ENCODE measurements at regions of chr12 and their contacts with region 1.

Region 1: GRCh38 chr12:111529424-111530368 is 69.4 kb downstream of the ATXN2 start:
- DNase-seq: no peak
- H3K4me3 ChIP-seq: no peak overlapping the region
- CTCF ChIP-seq: peak; percentile 70

Region 2: GRCh38 chr12:111519083-111519482 is 10.6 kb before region 1 on chr12:
- CTCF ChIA-PET with region 1: interaction called, 13 read pairs
- POLR2A ChIA-PET with region 1: no interaction called
- DNase-seq: no peak
- H3K4me3 ChIP-seq: no peak overlapping the region
- CTCF ChIP-seq: no peak

Region 3: DNA sequence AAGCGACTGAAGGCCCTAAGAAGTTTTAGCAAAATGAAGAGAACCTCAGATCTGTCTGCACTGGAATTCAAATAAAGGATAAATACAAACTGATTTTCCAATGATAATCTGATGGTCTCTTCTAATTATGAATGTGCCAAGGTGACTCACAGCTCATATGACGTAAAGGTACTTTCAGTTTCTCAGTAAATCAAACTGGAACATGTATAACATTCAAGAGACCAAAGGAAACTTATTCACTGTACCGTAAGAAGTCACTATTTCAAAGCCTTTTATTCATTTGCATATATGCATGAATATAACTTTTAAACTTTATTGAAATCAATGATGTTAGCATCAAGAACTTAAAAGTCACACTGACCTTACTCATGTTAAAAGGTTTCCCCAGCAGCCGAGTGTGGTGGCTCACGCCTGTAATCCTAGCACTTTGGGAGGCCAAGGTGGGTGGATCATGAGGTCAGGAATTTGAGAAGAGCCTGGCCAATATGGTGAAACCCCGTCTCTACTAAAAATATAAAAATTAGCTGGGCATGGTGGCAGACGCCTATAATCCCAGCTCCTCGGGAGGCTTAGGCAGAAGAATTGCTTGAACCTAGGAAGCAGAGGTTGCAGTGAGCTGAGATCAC is 17.2 kb after region 1 on chr12:
- CTCF ChIA-PET with region 1: interaction called, 11 read pairs
- POLR2A ChIA-PET with region 1: no interaction called
- DNase-seq: no peak
- H3K4me3 ChIP-seq: no peak overlapping the region
- CTCF ChIP-seq: no peak

Region 4: GRCh38 chr12:112012775-112013600 is 483.3 kb after region 1 on chr12 and contains the starts of genes ERP29 and TMEM116:
- CTCF ChIA-PET with region 1: no interaction called
- POLR2A ChIA-PET with region 1: no interaction called
- DNase-seq: peak; percentile 84
- H3K4me3 ChIP-seq: peak within 1 kb of the TSS; percentile 96
- CTCF ChIP-seq: peak; percentile 71

Measured in AG04449 (cell line).